ENCODE measurements at regions of chr15 and their contacts with region 1.

Region 1: GRCh38 chr15:74781431-74782258 is at the start of gene CSK:
- DNase-seq: peak; percentile 71 to 87
- ATAC-seq: peak; percentile 19 to 78 (median 52)
- H3K4me3 ChIP-seq: peak within 1 kb of the TSS; percentile 19 to 94 (median 78)
- H3K27ac ChIP-seq: peak within 1 kb of the TSS; percentile 87 to 98 (median 93)
- H3K4me1 ChIP-seq: peaks cover 44 to 90% (median 70%) of the 10 kb centered on the region in 9 donors
- H3K27me3 ChIP-seq: no peaks in the 10 kb centered on the region
- CTCF ChIP-seq: peak; percentile 51 to 83 (median 63)
- total RNA-seq, gene CSK: 20.3 to 48.6 (median 24.8) TPM

Region 2: DNA sequence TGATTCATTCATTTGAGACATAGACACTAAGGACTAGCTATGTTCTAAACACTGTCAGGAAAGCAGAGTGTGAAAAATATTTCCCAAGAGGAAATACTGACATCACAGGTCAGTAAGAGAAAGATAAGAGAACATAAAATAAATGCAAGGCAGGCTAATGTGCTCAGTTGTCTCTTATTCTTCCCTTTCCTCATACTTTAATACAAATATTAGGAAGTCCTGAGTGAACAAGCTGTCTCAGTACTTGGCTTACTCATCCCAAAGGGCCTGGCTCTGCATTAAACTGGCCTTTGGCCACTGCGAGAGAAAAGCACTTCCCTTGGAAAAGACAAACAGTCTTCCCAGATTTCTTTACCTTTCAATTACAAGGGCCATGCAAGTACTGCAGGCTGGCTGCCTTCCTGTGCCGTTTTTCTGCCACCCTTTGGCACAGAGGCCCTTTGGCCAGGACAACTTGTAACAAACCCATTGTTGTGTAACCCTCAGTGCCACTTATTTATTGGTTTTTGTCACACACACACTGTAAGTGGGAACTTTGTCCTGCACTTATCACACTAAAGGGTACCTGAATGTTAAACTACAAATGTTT is 117.5 kb before region 1 on chr15:
- intact Hi-C with region 1: no loop called
- DNase-seq: peak in 1 of 2 donors; percentile 23
- ATAC-seq: peak in 6 of 8 donors; percentile 24 to 95 (median 76)
- H3K4me3 ChIP-seq: no peak overlapping the region
- H3K27ac ChIP-seq: peak overlapping the region in 7 of 10 donors; percentile 8 to 76 (median 48)
- H3K4me1 ChIP-seq: peaks cover 2 to 32% (median 23%) of the 10 kb centered on the region in 9 donors
- H3K27me3 ChIP-seq: no peaks in the 10 kb centered on the region
- CTCF ChIP-seq: no peak

Region 3: DNA sequence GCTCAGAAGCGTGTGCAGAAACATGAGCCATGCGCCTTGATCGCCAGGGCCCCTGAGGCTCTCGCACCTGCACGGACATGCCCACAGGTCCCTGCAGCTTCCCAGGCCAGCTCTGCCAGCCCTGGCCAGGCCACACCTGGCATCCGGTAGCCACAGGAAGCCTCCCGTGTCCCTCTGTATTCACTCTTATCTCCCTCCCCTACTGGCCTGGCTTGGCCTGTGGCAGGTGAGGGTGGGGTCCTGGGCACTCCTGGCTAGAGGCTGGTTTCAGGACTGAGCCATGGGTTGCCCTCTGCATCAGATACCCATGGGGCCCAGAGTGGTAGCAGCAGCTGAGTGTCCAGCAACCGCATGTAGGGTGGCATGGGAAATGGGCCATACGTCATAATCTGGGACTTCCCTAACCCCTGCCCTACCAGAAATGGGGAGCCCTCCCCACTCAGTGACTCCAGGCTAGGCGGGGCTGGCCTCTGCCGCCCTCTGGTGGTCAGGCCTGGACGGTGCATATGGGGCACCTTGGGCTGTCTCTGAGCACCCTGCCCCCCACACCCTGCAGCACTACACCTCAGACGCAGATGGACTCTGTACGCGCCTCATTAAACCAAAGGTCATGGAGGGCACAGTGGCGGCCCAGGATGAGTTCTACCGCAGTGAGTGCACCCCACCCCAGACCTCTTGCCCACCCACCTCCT is 18.4 kb after region 1 on chr15:
- intact Hi-C with region 1: loop called in 1 of 10 experiments (anchors 2 kb)
- DNase-seq: peak; percentile 72 to 76
- ATAC-seq: peak; percentile 82 to 93 (median 88)
- H3K4me3 ChIP-seq: no peak overlapping the region
- H3K27ac ChIP-seq: peak overlapping the region in 7 of 10 donors; percentile 10 to 75 (median 51)
- H3K4me1 ChIP-seq: peaks cover 4 to 55% (median 23%) of the 10 kb centered on the region in 9 donors
- H3K27me3 ChIP-seq: no peaks in the 10 kb centered on the region
- CTCF ChIP-seq: peak in 8 of 9 donors; percentile 92 to 99 (median 98)

Region 4: DNA sequence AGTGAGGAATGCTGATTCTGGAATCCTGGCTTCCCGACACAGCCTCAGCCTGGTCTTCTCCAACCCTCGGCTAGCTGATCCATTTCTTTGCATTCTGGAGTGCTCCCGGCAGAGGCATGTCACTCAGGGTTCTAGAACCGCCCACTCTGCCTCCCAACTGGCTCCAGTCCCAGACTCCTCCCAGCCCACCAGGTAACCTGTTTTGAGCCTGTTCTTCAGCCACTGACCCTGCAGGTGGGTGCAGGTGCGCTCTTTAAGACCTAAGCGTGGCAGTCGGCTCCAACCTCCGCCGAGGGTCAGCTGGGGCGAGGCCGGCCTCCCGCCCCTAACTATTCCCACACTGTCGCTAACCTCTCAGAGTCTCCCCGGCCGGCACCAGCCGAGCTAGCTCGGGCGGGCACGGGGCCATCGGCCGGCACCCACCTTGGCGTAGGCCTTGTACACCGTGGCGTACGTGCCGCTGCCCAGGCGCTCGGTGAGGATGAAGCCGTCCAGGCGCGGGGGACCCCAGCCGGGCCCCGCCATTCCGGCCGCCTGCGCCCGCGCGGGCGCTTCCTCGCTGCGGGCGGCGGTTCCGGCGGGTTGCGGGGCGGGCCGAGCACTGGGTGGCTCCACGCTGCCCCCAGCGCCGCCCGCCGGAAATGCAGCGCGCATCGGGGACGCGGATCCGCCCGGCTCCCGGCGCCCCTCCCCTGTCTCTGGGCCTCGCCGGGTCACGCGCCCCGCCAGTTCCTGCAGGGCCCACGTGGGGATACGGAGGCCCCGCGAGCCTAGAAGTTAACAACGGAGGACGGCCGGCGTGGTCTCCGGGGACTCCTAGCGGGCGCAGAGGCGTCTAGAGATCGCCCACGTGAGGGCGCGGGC is 61.2 kb after region 1 on chr15 and contains the start of gene ULK3:
- intact Hi-C with region 1: loop called in 5 of 10 experiments (anchors 5 to 10 kb)
- DNase-seq: peak; percentile 90 to 92
- ATAC-seq: peak; percentile 84 to 94 (median 92)
- H3K4me3 ChIP-seq: peak within 1 kb of the TSS; percentile 77 to 98 (median 86)
- H3K27ac ChIP-seq: peak within 1 kb of the TSS; percentile 39 to 97 (median 88)
- H3K4me1 ChIP-seq: peaks cover 5 to 33% (median 23%) of the 10 kb centered on the region in 9 donors
- H3K27me3 ChIP-seq: no peaks in the 10 kb centered on the region
- CTCF ChIP-seq: peak; percentile 58 to 94 (median 75)
- total RNA-seq, gene ULK3: 21.3 to 44.0 (median 24.7) TPM

Region 5: GRCh38 chr15:74937596-74938296 is 156.1 kb after region 1 on chr15 and contains the start of gene COX5A:
- intact Hi-C with region 1: loop called in 1 of 10 experiments (anchors 5 kb)
- DNase-seq: peak; percentile 92 to 95
- ATAC-seq: peak; percentile 96 to 98 (median 98)
- H3K4me3 ChIP-seq: peak within 1 kb of the TSS; percentile 70 to 100 (median 90)
- H3K27ac ChIP-seq: peak within 1 kb of the TSS; percentile 96 to 100 (median 98)
- H3K4me1 ChIP-seq: peaks cover 6 to 46% (median 39%) of the 10 kb centered on the region in 9 donors
- H3K27me3 ChIP-seq: no peaks in the 10 kb centered on the region
- CTCF ChIP-seq: peak in 1 of 9 donors; percentile 19
- total RNA-seq, gene COX5A: 894 to 1,717 (median 1,286) TPM

Measured in heart right ventricle (tissue), 16 donors.